ENCODE measurements at regions of chr4 and their contacts with region 1.

Region 1: GRCh38 chr4:7890635-7891393 is 48.8 kb downstream of the AFAP1 start:
- DNase-seq: no peak
- H3K4me3 ChIP-seq: no peak overlapping the region
- H3K27ac ChIP-seq: peak overlapping the region; percentile 19; the same call in 1 of the 2 replicates
- H3K4me1 ChIP-seq: peaks cover 9% of the 10 kb centered on the region
- H3K27me3 ChIP-seq: no peaks in the 10 kb centered on the region
- CTCF ChIP-seq: no peak

Region 2: DNA sequence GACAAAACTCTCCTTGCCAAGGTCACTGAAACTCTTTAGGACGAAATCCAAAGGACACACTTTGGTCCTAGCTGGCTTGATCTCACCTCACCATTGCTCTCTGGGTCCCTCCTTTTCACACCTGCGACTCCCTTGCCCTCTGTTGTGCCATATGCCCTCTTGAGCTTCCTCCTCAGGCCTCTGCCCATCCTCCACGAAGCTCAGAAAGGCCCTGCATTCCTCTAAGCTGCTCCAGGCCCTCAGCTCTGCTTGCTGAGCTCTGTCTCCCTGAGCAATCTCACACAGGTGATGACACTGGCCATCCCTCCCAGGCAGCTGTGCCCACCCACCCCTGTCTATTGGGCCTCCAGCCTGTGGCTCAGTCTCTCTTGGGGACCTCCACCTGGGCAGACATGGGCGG is 58.9 kb after region 1 on chr4:
- CTCF ChIA-PET with region 1: interaction called, 13 read pairs
- POLR2A ChIA-PET with region 1: no interaction called
- intact Hi-C with region 1: no loop called
- DNase-seq: no peak
- H3K4me3 ChIP-seq: no peak overlapping the region
- H3K27ac ChIP-seq: no peak overlapping the region
- H3K4me1 ChIP-seq: no peaks in the 10 kb centered on the region
- H3K27me3 ChIP-seq: no peaks in the 10 kb centered on the region
- CTCF ChIP-seq: no peak

Measured in PC-9 (cell line).